Mammary epithelial cell (primary cell): ENCODE measurements at regions of chr20 and their contacts with region 1.

Region 1: DNA sequence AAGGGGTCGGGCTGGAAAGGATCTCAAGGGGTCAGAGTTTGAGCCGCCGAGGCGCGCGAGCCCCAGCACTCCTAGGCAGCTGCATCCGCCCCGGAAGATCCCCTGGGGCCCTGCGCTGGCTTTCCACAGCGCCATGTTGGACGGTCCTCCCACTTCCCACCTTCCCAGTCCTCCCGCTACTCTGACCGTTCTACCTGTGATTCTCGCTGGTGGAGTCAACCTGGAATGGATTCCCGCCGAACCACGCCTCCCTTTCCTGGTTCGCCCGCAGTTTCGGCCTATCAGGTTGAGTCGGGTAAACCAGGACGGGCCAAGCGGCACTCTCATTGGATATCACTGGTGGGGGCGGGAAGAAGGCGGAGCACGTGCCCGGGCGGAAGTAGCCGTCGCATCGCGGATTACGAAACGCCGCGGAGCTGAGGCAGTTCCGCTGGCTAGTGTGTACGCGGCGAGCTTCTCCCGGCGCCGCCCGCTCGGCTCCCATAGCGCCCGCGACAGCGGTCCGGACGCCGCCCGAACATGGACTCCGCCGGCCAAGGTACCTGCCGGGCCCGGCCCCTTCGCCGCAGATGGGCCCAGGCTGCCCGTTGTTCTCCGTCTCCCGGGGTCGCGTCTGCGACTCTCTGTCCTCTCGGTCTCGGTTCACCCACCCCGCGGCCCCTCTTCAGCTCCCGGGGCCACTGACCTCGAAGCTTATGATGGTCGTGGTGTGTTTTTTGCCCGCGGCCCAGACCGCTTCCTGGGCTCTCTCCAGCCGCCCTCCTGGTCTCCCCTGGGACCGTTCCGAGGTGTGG is at the start of gene TPD52L2:
- DNase-seq: peak; percentile 100
- H3K4me3 ChIP-seq: peak within 1 kb of the TSS; percentile 85 to 94 (median 92)
- H3K27ac ChIP-seq: peak within 1 kb of the TSS; percentile 95
- H3K4me1 ChIP-seq: peaks cover 12% of the 10 kb centered on the region
- H3K27me3 ChIP-seq: no peaks in the 10 kb centered on the region
- CTCF ChIP-seq: no peak
- total RNA-seq, gene TPD52L2: 122 to 150 TPM

Region 2: DNA sequence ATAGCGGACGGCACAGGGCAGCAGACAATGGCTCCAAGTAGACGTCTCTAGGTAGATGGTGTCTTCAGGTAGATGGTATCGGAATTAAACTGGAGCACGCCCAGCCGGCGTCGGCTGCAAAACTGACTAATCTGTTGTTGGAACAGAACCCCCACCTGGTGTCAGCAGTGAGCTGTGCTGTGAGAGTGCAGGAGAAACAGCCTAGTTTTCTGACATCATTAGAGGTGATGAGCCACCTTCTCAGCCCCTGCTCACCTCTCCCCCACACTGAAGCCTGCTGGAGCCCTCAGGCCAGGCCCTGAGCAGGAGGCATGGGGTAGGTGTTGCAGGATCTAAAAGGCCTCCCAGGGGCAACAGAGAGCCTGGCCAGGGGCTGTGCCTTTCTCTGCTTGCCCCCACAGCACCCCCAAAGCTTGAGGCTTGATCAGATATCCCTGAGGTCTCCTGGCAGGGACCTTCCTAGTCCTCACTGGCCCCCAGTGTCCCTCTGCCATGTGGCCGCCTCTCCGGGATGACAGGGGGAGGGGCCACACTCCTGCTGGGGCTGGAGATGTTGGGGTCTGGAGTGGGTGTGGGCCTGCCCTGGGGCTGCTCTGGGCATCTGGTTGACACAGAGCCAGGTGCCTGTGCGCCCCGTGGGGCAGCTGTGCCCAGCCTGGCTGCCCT is 284.1 kb before region 1 on chr20:
- CTCF ChIA-PET with region 1: no interaction called
- dilution Hi-C with region 1: no loop called
- in situ Hi-C with region 1: no loop called
- intact Hi-C with region 1: loop called (anchors 2 kb)
- DNase-seq: peak; percentile 79
- H3K4me3 ChIP-seq: no peak overlapping the region
- H3K27ac ChIP-seq: no peak overlapping the region
- H3K4me1 ChIP-seq: no peaks in the 10 kb centered on the region
- H3K27me3 ChIP-seq: no peaks in the 10 kb centered on the region
- CTCF ChIP-seq: peak; percentile 81 to 83

Region 3: GRCh38 chr20:63657937-63658748 is 206.9 kb before region 1 on chr20 and contains the start of gene RTEL1:
- CTCF ChIA-PET with region 1: no interaction called
- dilution Hi-C with region 1: no loop called
- in situ Hi-C with region 1: no loop called
- intact Hi-C with region 1: loop called (anchors 1 kb)
- DNase-seq: peak; percentile 91
- H3K4me3 ChIP-seq: peak within 1 kb of the TSS; percentile 75 to 92 (median 92)
- H3K27ac ChIP-seq: peak within 1 kb of the TSS; percentile 47
- H3K4me1 ChIP-seq: peaks cover 20% of the 10 kb centered on the region
- H3K27me3 ChIP-seq: no peaks in the 10 kb centered on the region
- CTCF ChIP-seq: no peak
- total RNA-seq, gene RTEL1: 8.0 to 32.5 TPM

Region 4: DNA sequence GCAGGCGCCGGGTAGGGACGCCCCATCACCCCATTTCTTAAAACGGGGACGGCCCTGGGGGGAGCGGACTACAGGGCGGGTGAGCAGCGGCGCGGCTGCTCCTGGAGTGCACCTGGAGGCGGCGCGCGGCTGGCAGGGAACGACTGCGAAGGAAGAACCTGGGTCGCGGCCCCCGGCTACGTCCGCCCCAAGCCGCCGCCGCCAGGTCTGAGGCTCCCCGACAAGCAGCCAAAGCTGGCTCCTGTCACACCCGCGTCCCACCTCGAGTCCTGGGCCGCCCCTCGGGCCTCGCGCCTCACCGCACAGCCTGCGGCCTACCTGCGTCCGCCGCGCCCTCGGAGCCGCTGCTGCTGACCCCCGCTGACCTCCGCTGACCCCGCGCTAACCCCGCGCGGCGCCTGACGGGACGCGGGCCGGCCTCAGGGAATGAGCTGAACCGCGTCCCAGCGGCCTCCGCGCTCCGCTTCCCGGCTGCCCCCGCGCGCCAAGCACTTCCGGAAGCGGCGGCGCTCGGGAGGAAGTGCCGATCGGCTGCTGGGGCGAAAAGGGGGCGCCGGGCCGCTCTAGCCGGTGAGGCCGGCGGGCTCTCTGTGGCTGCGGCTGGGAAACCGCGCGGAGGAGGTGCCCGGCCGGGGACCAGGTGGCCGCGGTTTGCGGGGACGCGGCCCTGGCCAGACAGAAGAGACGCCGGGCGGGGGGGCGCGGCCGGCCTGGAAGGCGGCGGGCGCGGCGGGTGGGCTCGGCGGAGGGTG is 157.3 kb before region 1 on chr20 and contains the starts of genes ARFRP1 and ZGPAT:
- CTCF ChIA-PET with region 1: no interaction called
- dilution Hi-C with region 1: loop called (anchors 5 kb)
- in situ Hi-C with region 1: loop called in 1 of 2 experiments (anchors 10 kb)
- intact Hi-C with region 1: loop called (anchors 1 kb)
- DNase-seq: peak; percentile 81
- H3K4me3 ChIP-seq: peak within 1 kb of the TSS; percentile 79 to 88 (median 84)
- H3K27ac ChIP-seq: peak within 1 kb of the TSS; percentile 34
- H3K4me1 ChIP-seq: peaks cover 21% of the 10 kb centered on the region
- H3K27me3 ChIP-seq: no peaks in the 10 kb centered on the region
- CTCF ChIP-seq: no peak
- total RNA-seq, gene ARFRP1: 28.8 to 61.1 TPM
- total RNA-seq, gene ZGPAT: 11.8 to 20.9 TPM

Region 5: GRCh38 chr20:63894358-63895201 is 29.5 kb after region 1 on chr20 and contains the start of gene DNAJC5:
- CTCF ChIA-PET with region 1: interaction called, 13 read pairs
- dilution Hi-C with region 1: no loop called
- in situ Hi-C with region 1: no loop called
- intact Hi-C with region 1: no loop called
- DNase-seq: peak; percentile 87
- H3K4me3 ChIP-seq: peak within 1 kb of the TSS; percentile 65 to 97 (median 85)
- H3K27ac ChIP-seq: peak within 1 kb of the TSS; percentile 73
- H3K4me1 ChIP-seq: peaks cover 25% of the 10 kb centered on the region
- H3K27me3 ChIP-seq: no peaks in the 10 kb centered on the region
- CTCF ChIP-seq: no peak
- total RNA-seq, gene DNAJC5: 77.0 to 78.7 TPM

Region 6: GRCh38 chr20:63934271-63935068 is 69.4 kb after region 1 on chr20:
- CTCF ChIA-PET with region 1: no interaction called
- dilution Hi-C with region 1: no loop called
- in situ Hi-C with region 1: no loop called
- intact Hi-C with region 1: no loop called
- DNase-seq: no peak
- H3K4me3 ChIP-seq: no peak overlapping the region
- H3K27ac ChIP-seq: no peak overlapping the region
- H3K4me1 ChIP-seq: no peaks in the 10 kb centered on the region
- H3K27me3 ChIP-seq: no peaks in the 10 kb centered on the region
- CTCF ChIP-seq: peak in 1 of 2 donors; percentile 12

Region 7: GRCh38 chr20:63973636-63974402 is 108.8 kb after region 1 on chr20:
- CTCF ChIA-PET with region 1: no interaction called
- dilution Hi-C with region 1: no loop called
- in situ Hi-C with region 1: no loop called
- intact Hi-C with region 1: loop called (anchors 1 kb)
- DNase-seq: peak; percentile 65
- H3K4me3 ChIP-seq: peak overlapping the region in 2 of 3 experiments; percentile 41 to 47
- H3K27ac ChIP-seq: no peak overlapping the region
- H3K4me1 ChIP-seq: peaks cover 25% of the 10 kb centered on the region
- H3K27me3 ChIP-seq: no peaks in the 10 kb centered on the region
- CTCF ChIP-seq: peak; percentile 89 to 97